ENCODE measurements at regions of chr2 and their contacts with region 1.

Region 1: DNA sequence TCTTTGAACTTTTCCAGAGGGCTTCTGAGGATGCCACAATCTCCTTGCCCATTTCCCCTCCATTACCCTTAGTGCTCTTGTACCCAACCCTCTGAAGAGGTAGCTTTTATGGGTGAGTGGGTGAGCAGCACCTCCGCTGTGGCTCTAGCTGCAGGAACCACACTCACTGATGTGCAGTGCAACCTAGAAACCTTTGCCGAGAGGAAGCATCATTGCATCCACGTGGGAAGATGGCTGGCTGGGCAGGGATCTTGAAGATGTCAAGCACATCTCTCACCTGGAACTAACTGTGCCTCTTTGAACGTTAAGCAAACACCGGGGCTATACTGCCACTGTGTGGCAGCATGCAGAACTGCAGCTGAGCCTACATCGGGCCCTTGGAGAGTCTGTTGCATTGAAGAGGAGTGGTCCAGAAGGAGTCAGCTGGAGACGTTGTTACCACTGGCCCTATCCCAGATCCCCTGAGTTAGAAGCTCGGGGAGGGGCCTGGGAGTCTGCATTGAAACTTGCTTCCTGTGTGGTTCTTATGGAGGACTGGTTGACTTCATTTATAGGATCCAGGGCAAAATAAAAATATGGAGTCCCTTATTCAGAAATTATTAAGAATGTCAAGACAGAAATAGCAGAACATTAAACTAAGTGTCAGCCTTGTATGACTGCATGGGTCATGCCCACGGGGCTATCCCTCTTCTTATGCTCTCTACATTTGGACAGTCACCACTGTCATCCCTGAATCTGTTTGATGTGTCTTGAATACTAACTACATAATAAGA is 28.7 kb downstream of the IGFBP5 start:
- DNase-seq: peak; percentile 41 to 88 (median 72)
- H3K4me3 ChIP-seq: no peak overlapping the region
- H3K27ac ChIP-seq: no peak overlapping the region
- H3K27me3 ChIP-seq: no peaks in the 10 kb centered on the region
- CTCF ChIP-seq: peak; percentile 88 to 100 (median 99)

Region 2: DNA sequence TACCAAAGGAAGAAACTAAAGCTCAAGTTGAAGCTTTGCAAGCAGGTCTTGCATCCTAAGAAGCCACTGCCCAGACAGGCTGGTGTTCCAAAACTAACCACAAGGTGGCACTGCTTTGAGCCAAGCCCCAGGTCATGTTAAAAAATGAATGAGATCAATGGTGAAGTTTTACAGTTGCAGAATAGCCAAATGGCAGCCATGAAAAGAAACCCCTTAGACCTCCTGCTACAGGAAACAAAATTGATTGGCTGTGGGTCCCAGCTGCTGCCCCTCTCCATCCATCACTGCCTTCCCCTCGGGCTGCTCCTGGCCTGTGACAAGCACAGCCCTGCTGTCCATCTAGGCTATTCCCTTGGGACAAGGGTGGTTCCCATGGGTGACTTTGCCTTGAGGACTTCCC is 632.6 kb before region 1 on chr2:
- intact Hi-C with region 1: loop called in 1 of 2 experiments (anchors 10 kb)
- DNase-seq: peak in 9 of 10 donors; percentile 45 to 84 (median 72)
- H3K4me3 ChIP-seq: no peak overlapping the region
- H3K27ac ChIP-seq: peak overlapping the region in 22 of 59 donors; percentile 8 to 73 (median 42)
- H3K27me3 ChIP-seq: no peaks in the 10 kb centered on the region
- CTCF ChIP-seq: peak; percentile 61 to 97 (median 88)

Region 3: GRCh38 chr2:216519154-216519762 is 147.4 kb before region 1 on chr2:
- intact Hi-C with region 1: loop called (anchors 1 to 2 kb)
- DNase-seq: peak in 4 of 10 donors; percentile 34 to 78 (median 54)
- H3K4me3 ChIP-seq: no peak overlapping the region
- H3K27ac ChIP-seq: no peak overlapping the region
- H3K27me3 ChIP-seq: no peaks in the 10 kb centered on the region
- CTCF ChIP-seq: peak; percentile 72 to 94 (median 85)

Region 4: GRCh38 chr2:216583147-216583546 is 83.5 kb before region 1 on chr2:
- intact Hi-C with region 1: loop called in 1 of 2 experiments (anchors 5 kb)
- DNase-seq: no peak
- H3K4me3 ChIP-seq: peak overlapping the region in 1 of 59 donors; percentile 14
- H3K27ac ChIP-seq: peak overlapping the region in 11 of 59 donors; percentile 53 to 83 (median 69)
- H3K27me3 ChIP-seq: peaks cover 0 to 3% (median 0%) of the 10 kb centered on the region in 45 donors
- CTCF ChIP-seq: no peak

Measured in dorsolateral prefrontal cortex (tissue), 120 donors.